ENCODE measurements at regions of chr2 and their contacts with region 1.

Region 1: DNA sequence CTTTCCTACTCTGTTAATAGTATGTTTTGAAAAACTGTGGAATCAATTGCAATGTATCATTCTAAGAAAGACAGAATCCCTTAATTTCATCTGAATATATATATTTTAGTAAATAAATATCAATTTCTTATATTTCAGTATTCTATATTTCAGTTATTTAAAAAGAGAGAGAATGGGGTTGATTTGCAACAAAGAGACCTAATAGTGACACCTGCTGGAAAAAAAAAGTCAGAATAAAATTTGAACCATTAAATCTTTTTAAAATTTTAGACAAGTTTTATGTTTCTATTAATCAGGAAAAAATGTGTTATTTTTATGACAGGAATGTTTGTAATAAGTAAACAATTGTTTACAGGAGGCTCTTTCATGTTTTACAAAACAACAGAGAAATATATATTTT is 20.7 kb upstream of the CCNT2 start:
- DNase-seq: no peak
- H3K4me3 ChIP-seq: no peak overlapping the region
- H3K27ac ChIP-seq: no peak overlapping the region
- H3K4me1 ChIP-seq: no peaks in the 10 kb centered on the region
- H3K27me3 ChIP-seq: no peaks in the 10 kb centered on the region
- CTCF ChIP-seq: peak; percentile 21 to 44

Region 2: DNA sequence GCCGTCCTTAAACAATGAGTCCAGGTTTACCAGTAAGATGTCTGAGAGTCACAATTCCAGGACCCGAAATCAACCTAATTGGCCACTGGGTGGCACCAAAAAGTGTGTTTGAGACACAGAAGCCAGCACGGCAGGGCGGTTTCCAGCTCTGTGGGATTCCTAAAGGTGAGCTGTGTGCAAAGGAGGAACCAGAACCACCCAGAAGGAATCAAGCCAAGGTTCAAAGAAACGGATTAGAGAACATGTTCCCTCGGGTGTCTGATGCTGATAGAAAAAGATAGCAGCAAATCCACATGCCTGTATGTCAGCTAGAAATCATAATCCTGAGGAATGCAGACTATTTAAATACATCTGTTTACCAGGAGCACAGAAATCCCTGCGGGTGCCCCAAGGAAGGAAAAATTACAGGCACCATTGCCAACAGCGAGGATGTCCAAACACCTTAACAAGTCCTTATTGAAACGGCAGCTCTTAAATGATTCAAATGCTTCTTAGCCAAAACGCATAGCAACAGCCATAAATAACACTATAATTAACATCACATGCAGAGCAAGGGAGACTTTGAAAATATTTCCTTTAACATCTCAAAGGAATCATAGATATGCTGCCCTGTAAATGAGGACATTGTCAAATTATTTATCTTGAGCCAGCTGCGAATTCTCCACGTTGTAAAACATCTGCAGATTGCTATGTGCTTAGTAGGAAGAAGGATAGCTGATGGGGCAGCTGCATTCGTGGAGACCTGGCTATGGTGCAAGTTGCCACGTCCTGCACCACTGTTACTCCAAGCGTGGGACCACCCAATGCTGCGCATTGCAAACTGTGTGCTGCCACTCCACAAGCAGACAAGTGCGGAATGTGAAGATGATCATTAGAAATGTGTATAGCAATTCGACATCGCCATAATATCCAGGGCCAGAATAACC is 1010.9 kb before region 1 on chr2:
- CTCF ChIA-PET with region 1: no interaction called
- dilution Hi-C with region 1: no loop called
- in situ Hi-C with region 1: no loop called
- intact Hi-C with region 1: loop called (anchors 5 kb)
- DNase-seq: peak; percentile 71
- H3K4me3 ChIP-seq: no peak overlapping the region
- H3K27ac ChIP-seq: no peak overlapping the region
- H3K4me1 ChIP-seq: peaks cover 16% of the 10 kb centered on the region
- H3K27me3 ChIP-seq: no peaks in the 10 kb centered on the region
- CTCF ChIP-seq: peak; percentile 61 to 73

Region 3: GRCh38 chr2:134460583-134460998 is 437.3 kb before region 1 on chr2:
- CTCF ChIA-PET with region 1: interaction called, 5 read pairs
- dilution Hi-C with region 1: no loop called
- in situ Hi-C with region 1: loop called (anchors 5 kb)
- intact Hi-C with region 1: loop called (anchors 2 kb)
- DNase-seq: peak; percentile 60
- H3K4me3 ChIP-seq: no peak overlapping the region
- H3K27ac ChIP-seq: no peak overlapping the region
- H3K4me1 ChIP-seq: peaks cover 16% of the 10 kb centered on the region
- H3K27me3 ChIP-seq: no peaks in the 10 kb centered on the region
- CTCF ChIP-seq: peak; percentile 62 to 87

Region 4: DNA sequence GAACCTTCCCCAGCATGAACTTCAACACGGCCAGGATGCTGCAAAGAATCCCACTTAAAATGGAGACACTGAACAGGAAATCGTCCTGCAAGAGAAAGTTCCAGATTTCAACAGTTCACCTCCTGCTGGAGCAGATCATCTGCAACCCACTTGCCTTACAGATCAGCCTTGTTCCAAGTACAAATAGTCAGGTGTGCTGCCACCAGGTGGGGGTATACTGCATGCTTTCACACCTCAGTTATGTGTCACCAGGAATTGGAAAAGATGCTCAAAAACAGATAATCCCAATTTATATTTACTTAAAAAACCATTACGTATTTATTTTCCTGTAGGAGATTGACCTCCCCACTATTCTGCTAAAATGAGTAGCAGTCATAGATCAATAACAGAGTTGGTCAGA is 431.8 kb before region 1 on chr2:
- CTCF ChIA-PET with region 1: no interaction called
- dilution Hi-C with region 1: no loop called
- in situ Hi-C with region 1: loop called (anchors 5 kb)
- intact Hi-C with region 1: loop called (anchors 1 kb)
- DNase-seq: peak; percentile 39
- H3K4me3 ChIP-seq: no peak overlapping the region
- H3K27ac ChIP-seq: no peak overlapping the region
- H3K4me1 ChIP-seq: peaks cover 5% of the 10 kb centered on the region
- H3K27me3 ChIP-seq: no peaks in the 10 kb centered on the region
- CTCF ChIP-seq: peak; percentile 48 to 60

Region 5: DNA sequence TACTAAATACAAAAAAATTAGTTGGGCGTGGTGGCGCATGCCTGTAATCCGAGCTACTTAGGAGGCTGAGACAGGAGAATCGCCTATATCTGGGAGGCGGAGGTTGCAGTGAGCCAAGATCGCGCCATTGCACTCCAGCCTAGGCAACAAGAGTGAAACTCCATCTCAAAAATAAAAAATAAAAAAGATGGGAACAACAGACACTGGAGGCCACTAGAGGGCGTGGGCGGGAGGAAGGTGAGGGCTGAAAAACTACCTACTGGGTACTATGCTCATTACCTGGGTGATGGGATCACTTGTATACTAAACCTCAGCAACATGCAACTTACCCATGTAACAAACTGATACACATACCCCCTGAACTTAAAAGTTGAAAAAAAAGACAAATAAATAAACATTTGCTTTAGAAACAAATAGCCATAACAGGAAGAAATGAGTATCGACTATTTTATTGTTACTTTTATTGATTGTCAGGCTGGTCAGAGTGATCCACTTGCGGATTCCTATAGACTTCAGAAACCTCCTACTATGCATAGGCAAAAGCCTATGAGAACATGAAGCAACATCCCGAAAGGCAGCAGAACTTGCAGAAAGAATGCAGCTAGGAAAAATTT is 240.2 kb before region 1 on chr2:
- CTCF ChIA-PET with region 1: no interaction called
- dilution Hi-C with region 1: no loop called
- in situ Hi-C with region 1: loop called (anchors 25 kb)
- intact Hi-C with region 1: loop called (anchors 1 kb)
- DNase-seq: no peak
- H3K4me3 ChIP-seq: no peak overlapping the region
- H3K27ac ChIP-seq: no peak overlapping the region
- H3K4me1 ChIP-seq: no peaks in the 10 kb centered on the region
- H3K27me3 ChIP-seq: no peaks in the 10 kb centered on the region
- CTCF ChIP-seq: peak; percentile 51 to 65

Region 6: GRCh38 chr2:134782792-134783191 is 115.1 kb before region 1 on chr2:
- CTCF ChIA-PET with region 1: no interaction called
- dilution Hi-C with region 1: no loop called
- in situ Hi-C with region 1: loop called in 1 of 2 experiments (anchors 10 kb)
- intact Hi-C with region 1: loop called (anchors 10 kb)
- DNase-seq: peak; percentile 57
- H3K4me3 ChIP-seq: no peak overlapping the region
- H3K27ac ChIP-seq: no peak overlapping the region
- H3K4me1 ChIP-seq: no peaks in the 10 kb centered on the region
- H3K27me3 ChIP-seq: no peaks in the 10 kb centered on the region
- CTCF ChIP-seq: peak; percentile 39 to 49

Region 7: GRCh38 chr2:134866549-134866981 is 31.4 kb before region 1 on chr2:
- CTCF ChIA-PET with region 1: interaction called, 13 read pairs
- dilution Hi-C with region 1: no loop called
- in situ Hi-C with region 1: no loop called
- intact Hi-C with region 1: no loop called
- DNase-seq: peak; percentile 66
- H3K4me3 ChIP-seq: no peak overlapping the region
- H3K27ac ChIP-seq: no peak overlapping the region
- H3K4me1 ChIP-seq: peaks cover 9% of the 10 kb centered on the region
- H3K27me3 ChIP-seq: no peaks in the 10 kb centered on the region
- CTCF ChIP-seq: no peak

Measured in mammary epithelial cell (primary cell).